Tibial artery (tissue), 4 donors: ENCODE measurements at regions of chr12 and their contacts with region 1.

Region 1: DNA sequence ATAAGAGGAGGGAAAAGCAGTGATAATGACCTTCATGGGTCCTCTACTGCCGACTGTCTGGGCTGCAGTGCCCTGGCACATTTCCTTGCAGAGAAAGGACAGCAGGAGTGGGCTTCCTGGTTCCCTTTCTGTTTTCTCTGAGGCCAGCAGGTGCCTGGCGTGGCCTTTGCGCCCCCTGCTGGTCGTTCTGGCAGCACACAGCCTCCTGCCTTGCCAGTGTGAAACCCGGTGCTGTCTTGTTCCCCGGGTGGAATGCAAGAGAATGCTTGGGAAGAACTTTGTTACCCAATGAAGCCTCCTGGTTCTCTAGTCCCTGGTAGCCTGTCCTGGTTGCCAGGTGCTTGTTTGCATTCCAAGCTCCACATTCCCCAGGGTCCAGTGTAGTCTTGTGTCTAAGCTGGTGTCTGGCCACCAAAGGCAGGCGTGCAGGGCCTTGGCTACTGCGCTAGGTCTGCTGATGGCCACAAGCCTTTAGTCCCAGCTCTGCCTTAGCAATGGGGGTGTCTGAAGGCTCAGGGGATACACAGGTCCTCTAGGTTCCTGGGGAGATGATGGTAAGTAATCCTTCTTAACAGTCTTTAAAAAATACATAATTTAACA is 1392.4 kb upstream of the TMEM132C start:
- DNase-seq: peak in 1 of 2 donors; percentile 22
- H3K4me3 ChIP-seq: no peak overlapping the region
- H3K27ac ChIP-seq: no peak overlapping the region
- H3K4me1 ChIP-seq: no peaks in the 10 kb centered on the region
- H3K27me3 ChIP-seq: no peaks in the 10 kb centered on the region
- CTCF ChIP-seq: peak; percentile 38 to 68

Region 2: DNA sequence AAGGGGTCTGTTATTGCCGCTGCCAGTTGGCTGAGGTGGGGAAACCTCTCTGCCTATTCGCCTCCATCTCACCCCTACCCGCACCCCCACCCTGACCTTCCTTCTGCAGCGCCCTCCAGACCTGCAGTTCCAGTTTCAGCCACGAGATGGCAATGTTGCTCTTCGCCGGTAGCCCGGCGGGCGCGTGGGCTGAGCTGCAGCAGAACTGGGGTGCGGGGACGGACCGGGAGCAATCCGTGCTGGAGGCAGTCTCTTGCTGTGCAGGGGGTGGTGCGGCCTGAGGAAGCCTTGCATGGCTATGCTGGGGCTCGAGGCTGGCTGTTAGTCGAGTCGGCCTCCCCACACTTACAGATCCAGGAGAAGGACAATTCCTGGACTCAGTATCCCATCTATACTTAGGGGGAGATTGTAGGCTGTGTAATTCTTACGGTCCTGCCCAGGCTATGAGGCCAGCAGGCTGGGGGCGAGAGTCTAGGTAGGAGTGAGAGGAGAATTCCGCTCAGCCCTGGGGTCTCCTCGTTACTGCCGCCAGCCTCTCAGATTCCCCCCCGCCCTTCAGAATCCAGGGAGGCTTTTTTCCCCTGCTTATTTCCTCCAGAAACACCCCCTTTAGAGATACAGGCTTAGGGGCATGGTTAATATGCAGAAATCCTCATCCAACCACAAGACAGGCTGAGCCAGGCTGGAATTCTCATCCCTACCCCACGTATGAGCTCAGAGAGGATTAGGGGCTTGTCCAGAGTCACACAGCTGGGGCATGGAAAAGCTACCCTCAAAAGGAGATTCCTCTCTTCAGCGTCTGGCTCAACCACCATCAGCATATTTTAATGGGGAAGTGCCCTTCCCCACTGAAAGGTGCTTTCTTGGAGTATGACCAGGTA is 1691.1 kb before region 1 on chr12:
- intact Hi-C with region 1: loop called (anchors 10 kb)
- DNase-seq: peak; percentile 59 to 77
- H3K4me3 ChIP-seq: no peak overlapping the region
- H3K27ac ChIP-seq: no peak overlapping the region
- H3K4me1 ChIP-seq: peaks cover 0 to 34% (median 29%) of the 10 kb centered on the region in 4 donors
- H3K27me3 ChIP-seq: peaks cover 0 to 47% of the 10 kb centered on the region in 2 donors
- CTCF ChIP-seq: peak; percentile 94 to 99

Region 3: DNA sequence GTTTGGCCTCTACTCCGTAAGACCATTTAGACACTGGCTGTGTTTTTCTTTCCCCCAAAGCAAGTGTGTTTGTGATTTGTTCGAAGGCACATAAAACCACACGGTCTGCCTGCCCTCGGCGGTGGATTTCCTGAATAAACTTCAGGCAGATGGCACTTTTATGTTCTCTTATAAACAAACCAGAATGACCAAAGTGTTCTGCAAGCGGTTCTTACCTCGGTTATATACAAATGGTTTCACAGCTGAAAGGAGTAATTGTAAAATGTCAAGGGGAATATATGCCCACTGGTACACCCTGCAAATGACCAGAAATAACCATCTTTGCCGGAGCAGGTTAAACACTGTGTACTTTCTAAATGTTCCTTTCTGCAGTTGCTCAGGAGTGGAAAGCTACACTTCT is 83.4 kb before region 1 on chr12:
- intact Hi-C with region 1: no loop called
- DNase-seq: no peak
- H3K4me3 ChIP-seq: no peak overlapping the region
- H3K27ac ChIP-seq: no peak overlapping the region
- H3K4me1 ChIP-seq: no peaks in the 10 kb centered on the region
- H3K27me3 ChIP-seq: no peaks in the 10 kb centered on the region
- CTCF ChIP-seq: no peak

Region 4: GRCh38 chr12:127014079-127014478 is 139.6 kb after region 1 on chr12:
- intact Hi-C with region 1: no loop called
- DNase-seq: no peak
- H3K4me3 ChIP-seq: no peak overlapping the region
- H3K27ac ChIP-seq: no peak overlapping the region
- H3K4me1 ChIP-seq: no peaks in the 10 kb centered on the region
- H3K27me3 ChIP-seq: no peaks in the 10 kb centered on the region
- CTCF ChIP-seq: no peak

Region 5: GRCh38 chr12:127398016-127398710 is 523.6 kb after region 1 on chr12:
- intact Hi-C with region 1: loop called (anchors 5 kb)
- DNase-seq: no peak
- H3K4me3 ChIP-seq: no peak overlapping the region
- H3K27ac ChIP-seq: no peak overlapping the region
- H3K4me1 ChIP-seq: no peaks in the 10 kb centered on the region
- H3K27me3 ChIP-seq: no peaks in the 10 kb centered on the region
- CTCF ChIP-seq: no peak